Activated CD4-positive, alpha-beta memory T cell treated with anti-CD3 and anti-CD28 coated beads for 36 hours (primary cell): ENCODE measurements at regions of chr2 and their contacts with region 1.

Region 1: GRCh38 chr2:29309090-29310029 is 194.1 kb downstream of the CLIP4 start:
- DNase-seq: peak; percentile 41
- H3K4me3 Mint-ChIP-seq: no peak overlapping the region
- H3K27ac Mint-ChIP-seq: no peak overlapping the region
- H3K4me1 Mint-ChIP-seq: peaks cover 2% of the 10 kb centered on the region
- H3K27me3 Mint-ChIP-seq: peaks cover 21% of the 10 kb centered on the region

Region 2: DNA sequence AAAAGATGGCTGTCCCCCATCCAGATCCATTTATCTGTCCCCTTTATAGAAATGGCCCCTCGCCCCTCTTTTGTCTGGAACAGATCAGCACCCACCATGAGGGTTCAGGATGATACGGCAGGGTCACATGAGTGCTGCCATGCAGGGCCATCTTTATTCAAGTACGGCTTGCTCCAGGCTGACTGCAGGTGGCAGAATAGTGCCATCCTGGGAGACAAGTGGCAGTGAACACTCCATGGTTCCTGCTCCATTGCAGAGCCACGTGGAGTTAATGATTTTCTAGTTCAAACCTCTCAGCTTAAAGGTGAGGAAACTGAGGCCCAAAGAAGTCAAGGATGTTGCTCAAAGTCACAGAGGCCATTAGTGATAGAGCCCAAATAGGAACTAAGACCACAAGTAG is 13.5 kb before region 1 on chr2:
- CTCF ChIA-PET with region 1: interaction called, 15 read pairs
- POLR2A ChIA-PET with region 1: no interaction called
- intact Hi-C with region 1: no loop called
- DNase-seq: no peak
- H3K4me3 Mint-ChIP-seq: no peak overlapping the region
- H3K27ac Mint-ChIP-seq: no peak overlapping the region
- H3K4me1 Mint-ChIP-seq: no peaks in the 10 kb centered on the region
- H3K27me3 Mint-ChIP-seq: peaks cover 29% of the 10 kb centered on the region

Region 3: DNA sequence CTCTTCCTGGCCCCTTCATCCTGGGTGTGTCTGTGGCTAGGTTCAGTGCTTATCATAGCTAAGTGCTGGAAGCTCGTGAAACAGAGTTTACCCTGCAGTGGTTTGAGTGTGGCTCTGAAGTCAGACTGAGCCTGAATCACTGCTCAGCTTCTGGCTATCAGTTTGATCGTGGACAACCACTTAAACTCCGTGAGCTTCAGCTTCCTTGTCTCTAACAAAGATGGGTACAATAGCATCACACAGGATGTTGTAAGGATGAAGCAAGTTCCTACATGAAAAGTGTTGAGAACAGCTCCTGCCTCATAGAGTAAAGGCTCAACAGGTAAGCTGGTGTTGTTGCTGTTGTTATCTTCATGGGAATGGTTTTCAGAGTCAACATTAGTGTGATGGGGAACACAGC is 16.2 kb after region 1 on chr2:
- CTCF ChIA-PET with region 1: interaction called, 51 read pairs
- POLR2A ChIA-PET with region 1: interaction called, 3 read pairs
- intact Hi-C with region 1: no loop called
- DNase-seq: peak; percentile 17
- H3K4me3 Mint-ChIP-seq: no peak overlapping the region
- H3K27ac Mint-ChIP-seq: no peak overlapping the region
- H3K4me1 Mint-ChIP-seq: peaks cover 2% of the 10 kb centered on the region
- H3K27me3 Mint-ChIP-seq: peaks cover 4% of the 10 kb centered on the region

Region 4: DNA sequence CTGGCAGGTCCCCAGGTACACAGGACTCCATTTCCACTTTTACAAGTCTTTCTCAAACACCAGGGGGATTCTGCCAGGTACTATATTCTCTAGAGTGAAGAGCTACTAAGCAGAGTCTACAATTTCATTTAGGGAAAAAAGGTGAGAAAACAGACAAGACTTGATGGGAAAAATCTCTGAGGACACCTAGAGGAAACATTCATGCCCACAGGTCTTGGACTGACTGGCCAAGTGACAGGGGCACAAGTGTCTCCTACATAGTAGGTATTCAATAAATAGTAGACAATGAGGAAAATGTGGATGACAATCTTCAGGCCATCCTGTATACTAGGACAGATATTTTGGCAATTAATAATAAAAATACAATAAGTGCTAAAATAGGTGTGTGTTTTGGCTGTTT is 34.5 kb after region 1 on chr2:
- CTCF ChIA-PET with region 1: no interaction called
- POLR2A ChIA-PET with region 1: no interaction called
- intact Hi-C with region 1: no loop called
- DNase-seq: no peak
- H3K4me3 Mint-ChIP-seq: no peak overlapping the region
- H3K27ac Mint-ChIP-seq: no peak overlapping the region
- H3K4me1 Mint-ChIP-seq: no peaks in the 10 kb centered on the region
- H3K27me3 Mint-ChIP-seq: peaks cover 23% of the 10 kb centered on the region